Mammary epithelial cell (primary cell): ENCODE measurements at regions of chr12 and their contacts with region 1.

Region 1: GRCh38 chr12:121423682-121424623 is 24.0 kb downstream of the RNF34 start:
- DNase-seq: no peak
- H3K4me3 ChIP-seq: no peak overlapping the region
- H3K27ac ChIP-seq: no peak overlapping the region
- H3K4me1 ChIP-seq: no peaks in the 10 kb centered on the region
- H3K27me3 ChIP-seq: no peaks in the 10 kb centered on the region
- CTCF ChIP-seq: no peak

Region 2: GRCh38 chr12:121318121-121318520 is 105.8 kb before region 1 on chr12:
- CTCF ChIA-PET with region 1: no interaction called
- dilution Hi-C with region 1: loop called (anchors 5 kb)
- in situ Hi-C with region 1: no loop called
- intact Hi-C with region 1: no loop called
- DNase-seq: no peak
- H3K4me3 ChIP-seq: no peak overlapping the region
- H3K27ac ChIP-seq: no peak overlapping the region
- H3K4me1 ChIP-seq: no peaks in the 10 kb centered on the region
- H3K27me3 ChIP-seq: no peaks in the 10 kb centered on the region
- CTCF ChIP-seq: no peak

Region 3: GRCh38 chr12:121472150-121472905 is 48.4 kb after region 1 on chr12:
- CTCF ChIA-PET with region 1: no interaction called
- dilution Hi-C with region 1: loop called (anchors 5 kb)
- in situ Hi-C with region 1: no loop called
- intact Hi-C with region 1: no loop called
- DNase-seq: no peak
- H3K4me3 ChIP-seq: no peak overlapping the region
- H3K27ac ChIP-seq: no peak overlapping the region
- H3K4me1 ChIP-seq: peaks cover 5% of the 10 kb centered on the region
- H3K27me3 ChIP-seq: no peaks in the 10 kb centered on the region
- CTCF ChIP-seq: no peak